PC-3 (cell line): ENCODE measurements at regions of chr5 and their contacts with region 1.

Region 1: DNA sequence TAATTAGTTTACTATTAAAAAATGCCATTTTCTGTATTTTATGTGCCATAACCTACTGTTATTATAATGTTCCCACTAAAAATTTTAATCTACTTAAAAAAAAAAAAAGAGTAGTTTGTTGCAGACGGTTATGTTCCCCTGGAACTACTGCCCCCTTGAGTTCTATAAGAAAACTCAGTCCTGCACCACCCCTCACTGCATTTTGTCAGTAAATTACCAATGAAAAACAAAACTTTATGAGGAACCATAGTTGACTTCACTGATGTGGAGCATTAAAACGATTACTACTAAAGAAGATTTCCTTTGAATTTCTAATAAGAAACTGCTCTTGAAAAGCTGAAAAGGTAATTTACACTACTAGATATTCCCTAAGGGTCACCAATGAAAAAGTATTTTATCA is 288.7 kb downstream of the FBXL17 start:
- DNase-seq: peak; percentile 55
- ATAC-seq: peak; percentile 75
- H3K4me3 ChIP-seq: no peak overlapping the region
- H3K27ac ChIP-seq: no peak overlapping the region
- H3K4me1 ChIP-seq: no peaks in the 10 kb centered on the region
- H3K27me3 ChIP-seq: no peaks in the 10 kb centered on the region
- CTCF ChIP-seq: peak; percentile 77

Region 2: GRCh38 chr5:107698286-107698685 is 394.9 kb before region 1 on chr5:
- CTCF ChIA-PET with region 1: no interaction called
- POLR2A ChIA-PET with region 1: no interaction called
- intact Hi-C with region 1: loop called (anchors 5 kb)
- DNase-seq: no peak
- ATAC-seq: no peak
- H3K4me3 ChIP-seq: no peak overlapping the region
- H3K27ac ChIP-seq: no peak overlapping the region
- H3K4me1 ChIP-seq: no peaks in the 10 kb centered on the region
- H3K27me3 ChIP-seq: no peaks in the 10 kb centered on the region
- CTCF ChIP-seq: no peak

Region 3: GRCh38 chr5:107985144-107985543 is 108.0 kb before region 1 on chr5:
- CTCF ChIA-PET with region 1: no interaction called
- POLR2A ChIA-PET with region 1: no interaction called
- intact Hi-C with region 1: no loop called
- DNase-seq: peak; percentile 27
- ATAC-seq: no peak
- H3K4me3 ChIP-seq: no peak overlapping the region
- H3K27ac ChIP-seq: no peak overlapping the region
- H3K4me1 ChIP-seq: no peaks in the 10 kb centered on the region
- H3K27me3 ChIP-seq: no peaks in the 10 kb centered on the region
- CTCF ChIP-seq: no peak

Region 4: GRCh38 chr5:108201721-108202120 is 108.5 kb after region 1 on chr5:
- CTCF ChIA-PET with region 1: no interaction called
- POLR2A ChIA-PET with region 1: no interaction called
- intact Hi-C with region 1: no loop called
- DNase-seq: no peak
- ATAC-seq: no peak
- H3K4me3 ChIP-seq: no peak overlapping the region
- H3K27ac ChIP-seq: no peak overlapping the region
- H3K4me1 ChIP-seq: no peaks in the 10 kb centered on the region
- H3K27me3 ChIP-seq: no peaks in the 10 kb centered on the region
- CTCF ChIP-seq: no peak